GM12878 (cell line): ENCODE measurements at regions of chr1 and their contacts with region 1.

Region 1: DNA sequence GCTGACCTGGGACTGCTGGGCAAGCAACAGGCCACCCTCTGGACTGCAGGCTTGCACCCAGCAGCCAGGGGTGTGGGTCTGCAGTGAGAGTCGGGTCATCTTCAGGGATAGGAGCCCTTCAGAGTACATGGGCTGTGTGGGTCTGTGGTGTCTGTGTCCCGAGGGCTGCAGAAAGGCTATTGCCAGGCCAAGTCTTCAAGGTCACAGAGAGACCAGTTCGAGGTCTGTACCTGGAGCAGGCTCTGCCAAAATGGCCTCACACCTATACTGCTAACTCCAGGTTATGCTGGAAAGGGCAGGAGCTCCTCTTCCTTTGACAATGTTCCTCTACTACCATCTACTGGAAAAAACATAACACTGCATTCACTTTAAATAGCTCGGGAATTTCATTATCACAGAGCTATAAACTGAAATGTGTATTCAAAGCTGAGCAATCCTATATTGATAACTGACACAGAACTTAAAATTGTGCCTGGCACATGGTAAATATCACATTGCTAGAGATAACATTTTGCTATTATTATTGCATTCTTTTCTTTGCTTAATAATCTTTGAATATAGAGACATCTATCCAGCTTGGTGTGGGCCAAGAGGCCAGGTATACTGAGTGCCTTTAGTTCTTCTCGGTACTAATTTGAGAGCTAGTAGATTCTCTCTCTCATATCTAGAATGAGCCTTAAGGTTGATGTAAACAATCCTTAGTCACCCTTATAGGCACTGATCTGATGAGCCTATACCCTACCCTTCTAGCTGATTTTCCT is 6.9 kb upstream of the DNAH14 start:
- DNase-seq: peak; percentile 11
- ATAC-seq: peak; percentile 84
- H3K4me3 ChIP-seq: no peak overlapping the region
- H3K27ac ChIP-seq: no peak overlapping the region
- H3K4me1 ChIP-seq: no peaks in the 10 kb centered on the region
- H3K27me3 ChIP-seq: no peaks in the 10 kb centered on the region
- CTCF ChIP-seq: peak; percentile 54 to 78 (median 61); a peak in 5 of 6 replicates
- EP300 ChIP-seq: no peak
- POLR2A ChIP-seq: no peak
- RAD21 ChIP-seq: peak; percentile 78

Region 2: DNA sequence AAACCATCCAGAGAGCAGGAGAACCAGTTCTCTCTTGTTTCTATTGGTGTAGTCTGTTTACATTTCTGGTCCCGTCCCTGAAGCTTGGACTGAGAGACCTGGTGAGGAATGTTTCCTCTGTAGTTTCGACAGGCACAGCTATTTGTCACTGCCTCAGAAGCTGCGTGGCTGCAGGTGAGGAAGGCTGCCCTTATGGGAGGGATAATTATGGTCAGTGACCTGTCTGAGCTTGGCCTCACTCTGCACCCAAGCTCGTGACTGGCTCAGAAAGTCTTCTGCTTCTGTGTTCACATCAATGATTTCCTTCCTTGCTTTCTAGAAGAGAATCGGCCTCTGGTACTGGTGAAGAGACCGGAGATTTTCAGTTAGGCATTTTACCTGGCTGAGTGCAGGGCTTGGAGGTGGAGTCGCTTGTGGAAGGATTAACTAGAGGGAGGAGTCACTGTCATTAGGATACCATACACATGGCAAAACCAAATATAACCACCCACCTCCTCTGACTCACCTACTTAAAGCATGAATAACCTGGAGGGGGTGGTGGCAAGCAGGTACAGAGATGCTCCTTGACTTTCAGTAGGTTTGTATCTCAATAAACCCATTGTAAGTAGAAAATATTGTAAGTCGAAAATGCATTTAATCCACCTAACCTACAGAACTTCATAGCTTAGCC is 468.1 kb before region 1 on chr1:
- CTCF ChIA-PET with region 1: interaction called, 17 read pairs
- POLR2A ChIA-PET with region 1: no interaction called
- RAD21 ChIA-PET with region 1: interaction called, 8 read pairs
- SMC1A ChIA-PET with region 1: interaction called, 13 read pairs
- in situ Hi-C with region 1: no loop called
- intact Hi-C with region 1: no loop called
- DNase-seq: no peak
- ATAC-seq: no peak
- H3K4me3 ChIP-seq: no peak overlapping the region
- H3K27ac ChIP-seq: no peak overlapping the region
- H3K4me1 ChIP-seq: no peaks in the 10 kb centered on the region
- H3K27me3 ChIP-seq: no peaks in the 10 kb centered on the region
- CTCF ChIP-seq: no peak
- EP300 ChIP-seq: no peak
- POLR2A ChIP-seq: no peak
- RAD21 ChIP-seq: no peak

Region 3: DNA sequence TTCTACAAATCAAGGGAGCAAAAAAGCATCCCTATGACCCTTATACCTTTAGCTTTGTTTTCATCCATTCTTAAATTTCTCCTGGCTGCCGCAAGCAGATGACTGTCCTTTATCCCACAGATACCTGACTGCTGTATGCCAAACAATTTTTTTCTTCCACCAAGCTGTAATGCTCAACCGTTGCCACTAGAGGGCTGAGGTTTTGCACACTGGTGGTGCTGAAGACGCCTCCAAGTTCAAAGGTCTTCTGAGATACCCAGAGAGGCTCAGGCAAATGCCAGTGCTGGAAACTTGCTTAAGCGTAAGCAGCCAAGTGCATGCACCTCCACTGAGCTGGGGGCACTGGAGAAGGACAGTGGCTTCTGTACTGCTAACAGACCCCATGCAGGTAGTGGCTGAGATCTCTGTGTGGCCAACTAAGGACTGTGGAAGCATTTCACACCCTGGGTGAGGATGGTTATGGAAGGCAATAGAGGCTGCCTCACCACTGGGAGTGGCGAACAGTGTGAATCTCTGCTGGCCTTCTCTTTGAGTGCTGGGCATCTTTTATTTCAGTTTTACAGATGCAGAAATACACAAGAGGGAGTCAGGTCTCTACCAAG is 277.9 kb before region 1 on chr1:
- CTCF ChIA-PET with region 1: interaction called, 24 read pairs
- POLR2A ChIA-PET with region 1: no interaction called
- RAD21 ChIA-PET with region 1: interaction called, 22 read pairs
- SMC1A ChIA-PET with region 1: interaction called, 8 read pairs
- in situ Hi-C with region 1: no loop called
- intact Hi-C with region 1: loop called (anchors 1 kb)
- DNase-seq: peak; percentile 24
- ATAC-seq: peak; percentile 85
- H3K4me3 ChIP-seq: no peak overlapping the region
- H3K27ac ChIP-seq: no peak overlapping the region
- H3K4me1 ChIP-seq: no peaks in the 10 kb centered on the region
- H3K27me3 ChIP-seq: no peaks in the 10 kb centered on the region; a peak in 1 of 4 replicates
- CTCF ChIP-seq: peak; percentile 84 to 91 (median 90)
- EP300 ChIP-seq: no peak
- POLR2A ChIP-seq: no peak
- RAD21 ChIP-seq: peak; percentile 84

Region 4: DNA sequence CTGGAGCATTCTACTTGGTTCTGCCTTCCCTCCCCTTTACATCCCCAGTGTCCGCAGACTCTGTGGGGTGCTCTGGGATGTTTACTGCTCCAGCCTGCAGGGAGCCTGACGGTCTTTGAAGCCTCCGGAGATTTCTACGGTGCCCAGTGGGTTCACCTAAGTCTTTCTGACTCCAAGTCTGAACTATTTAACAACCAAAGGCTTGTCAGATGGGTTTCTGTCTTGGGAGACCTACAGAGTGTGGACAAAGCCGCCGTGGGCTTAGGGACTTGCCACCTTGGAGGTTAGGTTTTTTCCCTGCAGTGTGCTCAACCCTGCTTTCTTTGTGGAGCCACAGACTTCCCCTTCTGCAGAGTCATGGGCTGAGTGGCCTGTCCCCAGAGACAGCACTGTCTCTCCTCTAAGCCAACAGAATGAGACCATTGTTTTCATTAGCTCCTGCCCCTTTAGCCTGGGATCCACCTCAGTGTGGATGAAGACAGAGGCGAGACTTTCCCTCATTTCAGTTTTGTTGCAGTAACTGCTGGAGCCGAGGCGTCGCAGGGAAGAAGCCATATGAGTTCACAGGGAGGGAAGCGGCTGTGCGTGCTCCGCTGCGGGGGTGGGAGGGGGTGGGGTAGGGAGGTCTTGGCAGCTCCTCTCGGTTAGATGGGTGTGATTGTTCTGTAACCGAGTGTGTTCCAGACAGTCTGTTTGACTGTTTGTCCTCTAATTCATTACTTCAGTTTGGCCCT is 185.8 kb before region 1 on chr1:
- CTCF ChIA-PET with region 1: interaction called, 13 read pairs
- POLR2A ChIA-PET with region 1: no interaction called
- RAD21 ChIA-PET with region 1: interaction called, 26 read pairs
- SMC1A ChIA-PET with region 1: interaction called, 9 read pairs
- in situ Hi-C with region 1: no loop called
- intact Hi-C with region 1: loop called (anchors 5 kb)
- DNase-seq: peak; percentile 93
- ATAC-seq: peak; percentile 61
- H3K4me3 ChIP-seq: no peak overlapping the region
- H3K27ac ChIP-seq: peak overlapping the region; percentile 49
- H3K4me1 ChIP-seq: peaks cover 77% of the 10 kb centered on the region
- H3K27me3 ChIP-seq: no peaks in the 10 kb centered on the region
- CTCF ChIP-seq: no peak
- EP300 ChIP-seq: peak; percentile 88 to 90; a peak in 3 of 4 replicates
- POLR2A ChIP-seq: no peak
- RAD21 ChIP-seq: no peak

Region 5: GRCh38 chr1:224879162-224879803 is 43.3 kb before region 1 on chr1:
- CTCF ChIA-PET with region 1: interaction called, 7 read pairs
- POLR2A ChIA-PET with region 1: interaction called, 3 read pairs
- RAD21 ChIA-PET with region 1: interaction called, 20 read pairs
- SMC1A ChIA-PET with region 1: interaction called, 12 read pairs
- in situ Hi-C with region 1: no loop called
- intact Hi-C with region 1: no loop called
- DNase-seq: no peak
- ATAC-seq: peak; percentile 16; the same call in 2 of the 3 replicates
- H3K4me3 ChIP-seq: no peak overlapping the region
- H3K27ac ChIP-seq: no peak overlapping the region
- H3K4me1 ChIP-seq: no peaks in the 10 kb centered on the region
- H3K27me3 ChIP-seq: no peaks in the 10 kb centered on the region
- CTCF ChIP-seq: no peak
- EP300 ChIP-seq: no peak
- POLR2A ChIP-seq: no peak
- RAD21 ChIP-seq: no peak

Region 6: GRCh38 chr1:224906340-224906739 is 16.2 kb before region 1 on chr1:
- CTCF ChIA-PET with region 1: interaction called, 18 read pairs
- POLR2A ChIA-PET with region 1: interaction called, 3 read pairs
- RAD21 ChIA-PET with region 1: interaction called, 10 read pairs
- SMC1A ChIA-PET with region 1: interaction called, 12 read pairs
- in situ Hi-C with region 1: no loop called
- intact Hi-C with region 1: no loop called
- DNase-seq: no peak
- ATAC-seq: peak; percentile 59
- H3K4me3 ChIP-seq: no peak overlapping the region
- H3K27ac ChIP-seq: no peak overlapping the region
- H3K4me1 ChIP-seq: no peaks in the 10 kb centered on the region
- H3K27me3 ChIP-seq: no peaks in the 10 kb centered on the region
- CTCF ChIP-seq: no peak
- EP300 ChIP-seq: no peak
- POLR2A ChIP-seq: no peak
- RAD21 ChIP-seq: no peak

Region 7: DNA sequence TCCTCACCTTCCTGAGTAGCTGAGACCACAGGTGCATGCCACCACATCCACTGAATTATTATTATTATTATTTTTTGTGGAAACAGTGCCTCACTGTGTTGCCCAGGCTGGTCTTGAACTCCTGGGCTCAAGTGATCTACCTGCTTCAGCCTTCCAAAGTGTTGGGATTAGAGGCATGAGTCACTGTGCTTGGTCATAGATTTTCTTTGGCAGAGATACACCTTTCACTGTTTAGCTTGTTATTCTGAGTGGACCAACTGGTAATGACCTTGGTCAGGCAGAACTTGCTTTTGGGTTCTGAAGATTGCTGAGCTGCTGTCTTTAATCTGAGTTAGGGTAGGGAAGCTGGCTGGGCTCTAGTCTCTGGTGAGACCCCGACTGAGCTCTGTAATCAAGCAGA is 73.7 kb after region 1 on chr1:
- CTCF ChIA-PET with region 1: no interaction called
- POLR2A ChIA-PET with region 1: no interaction called
- RAD21 ChIA-PET with region 1: no interaction called
- SMC1A ChIA-PET with region 1: no interaction called
- in situ Hi-C with region 1: no loop called
- intact Hi-C with region 1: no loop called
- DNase-seq: no peak
- ATAC-seq: no peak
- H3K4me3 ChIP-seq: no peak overlapping the region
- H3K27ac ChIP-seq: no peak overlapping the region
- H3K4me1 ChIP-seq: no peaks in the 10 kb centered on the region
- H3K27me3 ChIP-seq: no peaks in the 10 kb centered on the region
- CTCF ChIP-seq: no peak
- EP300 ChIP-seq: no peak
- POLR2A ChIP-seq: no peak
- RAD21 ChIP-seq: no peak

Region 8: GRCh38 chr1:225691377-225691776 is 768.8 kb after region 1 on chr1:
- CTCF ChIA-PET with region 1: no interaction called
- POLR2A ChIA-PET with region 1: no interaction called
- RAD21 ChIA-PET with region 1: no interaction called
- SMC1A ChIA-PET with region 1: no interaction called
- in situ Hi-C with region 1: no loop called
- intact Hi-C with region 1: no loop called
- DNase-seq: no peak
- ATAC-seq: no peak
- H3K4me3 ChIP-seq: no peak overlapping the region
- H3K27ac ChIP-seq: no peak overlapping the region
- H3K4me1 ChIP-seq: no peaks in the 10 kb centered on the region
- H3K27me3 ChIP-seq: peaks cover 0 to 2% of the 10 kb centered on the region in 2 experiments; a peak in 1 of 4 replicates
- CTCF ChIP-seq: no peak
- EP300 ChIP-seq: no peak
- POLR2A ChIP-seq: no peak
- RAD21 ChIP-seq: no peak